Aorta (tissue), 5 donors: ENCODE measurements at regions of chr19 and their contacts with region 1.

Region 1: GRCh38 chr19:4342615-4343369 is 570 bp upstream of the MPND start:
- DNase-seq: peak; percentile 96 to 98
- ATAC-seq: peak; percentile 97
- H3K4me3 ChIP-seq: peak overlapping the region; percentile 57 to 71
- H3K27ac ChIP-seq: peak overlapping the region in 1 of 2 donors; percentile 54
- H3K4me1 ChIP-seq: peaks cover 0 to 2% of the 10 kb centered on the region in 2 donors
- H3K27me3 ChIP-seq: no peaks in the 10 kb centered on the region

Region 2: DNA sequence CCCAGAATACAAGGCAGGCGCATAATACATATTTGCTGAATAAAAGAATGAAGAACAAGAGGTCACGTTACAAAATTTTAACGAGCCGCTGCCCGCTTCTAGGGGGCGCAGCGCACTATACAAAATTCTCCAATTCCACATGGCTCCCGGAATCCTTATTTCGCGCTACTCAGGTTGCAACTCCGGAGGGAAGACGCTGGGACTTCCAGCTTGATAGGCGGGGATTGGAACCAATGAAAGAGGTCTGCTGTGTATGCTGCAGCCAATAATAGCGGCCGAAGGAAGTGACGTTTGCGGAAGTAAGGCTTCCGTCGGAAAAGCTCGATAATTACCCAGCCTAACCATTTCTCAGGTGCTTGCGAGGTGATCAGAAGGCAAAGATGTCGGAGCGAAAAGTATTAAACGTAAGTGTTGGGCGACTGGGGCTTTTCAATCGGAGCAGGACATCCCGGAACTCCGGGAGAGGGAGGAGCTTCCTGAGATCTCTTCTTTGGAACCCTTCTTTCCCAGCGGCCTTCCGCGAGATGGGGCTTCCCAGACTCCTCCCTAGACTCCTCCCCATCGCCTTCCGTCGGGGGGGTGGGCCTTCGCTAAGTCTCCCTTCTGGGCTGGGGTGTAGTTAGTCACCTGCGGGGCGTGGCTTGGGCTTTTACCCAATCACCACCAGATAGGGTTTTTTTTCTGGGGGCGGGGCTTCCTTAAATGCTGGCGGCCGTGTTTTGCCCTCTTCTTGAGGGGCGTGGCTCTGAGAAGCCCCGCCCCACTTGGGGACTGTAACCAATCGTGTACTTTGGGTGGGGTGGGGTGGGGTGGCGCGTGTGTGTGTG is 95.8 kb before region 1 on chr19 and contains the start of gene YJU2:
- intact Hi-C with region 1: loop called in 1 of 2 experiments (anchors 2 kb)
- DNase-seq: peak; percentile 98 to 100
- ATAC-seq: peak; percentile 98
- H3K4me3 ChIP-seq: peak within 1 kb of the TSS; percentile 76 to 79
- H3K27ac ChIP-seq: peak within 1 kb of the TSS; percentile 69 to 87
- H3K4me1 ChIP-seq: no peaks in the 10 kb centered on the region
- H3K27me3 ChIP-seq: no peaks in the 10 kb centered on the region
- total RNA-seq, gene YJU2: 12.5 to 15.0 TPM

Region 3: GRCh38 chr19:4375164-4376027 is 32.6 kb after region 1 on chr19:
- intact Hi-C with region 1: loop called in 1 of 2 experiments (anchors 2 kb)
- DNase-seq: peak; percentile 72 to 88
- ATAC-seq: no peak
- H3K4me3 ChIP-seq: no peak overlapping the region
- H3K27ac ChIP-seq: peak overlapping the region; percentile 40 to 88
- H3K4me1 ChIP-seq: peaks cover 0 to 6% of the 10 kb centered on the region in 2 donors
- H3K27me3 ChIP-seq: no peaks in the 10 kb centered on the region

Region 4: DNA sequence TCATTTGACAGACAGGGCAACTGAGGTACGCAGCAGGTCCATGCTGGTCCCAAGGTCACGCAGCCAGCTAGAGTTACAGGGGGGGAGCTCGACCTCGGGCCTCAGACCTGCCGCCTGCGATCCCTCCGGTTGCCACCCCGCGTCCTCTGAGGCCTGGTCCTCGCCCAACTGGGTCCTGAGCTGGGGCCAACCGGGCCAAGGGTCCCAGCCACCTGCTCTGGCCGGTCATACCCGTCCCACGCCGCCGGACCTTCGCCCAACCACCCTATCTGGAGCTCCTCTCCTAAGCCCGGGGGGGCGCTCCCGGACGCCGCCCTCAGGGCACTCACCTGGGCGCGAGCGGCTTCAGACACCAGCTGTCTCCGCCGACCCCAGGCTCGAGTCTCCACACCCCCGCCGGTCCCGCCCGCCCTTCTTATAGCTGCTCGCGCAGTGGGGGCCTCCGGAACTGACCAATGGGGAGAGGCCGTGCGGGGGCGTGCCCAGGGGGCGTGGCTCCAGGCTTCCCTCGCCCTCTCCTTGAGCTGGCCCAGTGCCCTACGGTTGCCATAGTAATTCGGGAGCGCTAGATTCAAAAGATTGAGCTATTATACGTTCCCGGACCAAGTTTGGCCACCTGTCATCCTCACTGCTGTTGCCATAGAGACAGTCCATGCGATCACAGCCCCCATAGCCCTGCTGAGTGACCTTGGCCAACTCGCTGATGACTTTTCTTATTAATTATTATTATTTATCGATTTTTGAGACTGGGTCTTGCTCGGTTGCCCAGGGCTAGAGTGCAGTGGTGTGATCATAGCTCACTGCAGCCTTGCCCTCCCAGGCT is 192.3 kb after region 1 on chr19 and contains the start of gene PLIN5:
- intact Hi-C with region 1: no loop called
- DNase-seq: peak in 1 of 2 donors; percentile 89
- ATAC-seq: peak; percentile 63
- H3K4me3 ChIP-seq: no peak within 1 kb of the TSS
- H3K27ac ChIP-seq: no peak within 1 kb of the TSS
- H3K4me1 ChIP-seq: no peaks in the 10 kb centered on the region
- H3K27me3 ChIP-seq: no peaks in the 10 kb centered on the region
- total RNA-seq, gene PLIN5: 2.0 to 3.8 TPM